Naive thymus-derived CD4-positive, alpha-beta T cell (primary cell): ENCODE measurements at regions of chr9 and their contacts with region 1.

Region 1: DNA sequence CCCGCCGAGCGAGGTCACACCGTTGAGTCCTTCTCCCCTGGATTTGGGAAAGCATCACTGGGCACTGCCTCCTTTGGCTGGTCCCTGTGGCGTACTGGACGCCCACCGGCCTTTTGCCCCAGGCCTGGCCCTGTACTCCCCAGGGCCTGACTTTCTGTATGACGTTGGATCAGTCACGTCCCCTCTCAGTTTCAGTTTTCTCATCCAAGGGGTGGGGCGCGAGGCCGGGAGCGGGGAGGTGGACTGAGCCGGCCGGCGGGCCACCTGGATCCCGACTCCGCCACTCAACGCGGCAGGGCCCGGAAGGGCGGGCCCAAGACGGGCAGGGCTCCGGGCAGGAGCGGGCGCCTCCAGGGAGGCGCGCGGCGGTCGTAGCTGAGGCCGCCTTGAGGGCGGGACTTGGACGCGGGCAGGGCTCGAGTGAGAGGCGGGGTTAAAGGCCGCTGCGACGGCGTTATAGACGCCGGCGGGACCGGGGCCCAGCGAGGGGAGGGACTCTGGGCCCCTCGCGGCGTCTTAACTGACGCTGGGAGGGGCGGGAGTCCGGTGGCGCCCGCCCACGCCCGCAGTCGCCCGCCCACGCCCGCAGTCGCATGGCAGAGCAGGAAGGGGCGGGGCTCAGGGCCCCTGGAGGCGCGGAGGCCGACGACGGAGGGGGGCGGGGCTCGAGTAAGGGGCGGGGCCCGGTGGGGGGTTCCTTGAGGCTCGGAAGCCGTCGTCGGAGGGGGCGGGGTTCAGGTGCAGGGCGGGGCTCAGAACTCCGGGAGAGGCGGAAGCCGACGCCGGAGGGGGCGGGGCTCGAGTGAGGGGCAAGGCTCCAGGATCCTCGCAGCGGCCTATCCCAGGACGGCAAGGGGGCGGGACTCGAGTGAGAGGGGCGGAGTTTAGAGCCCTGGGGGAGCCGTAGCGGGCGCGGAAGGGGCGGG is 549 bp upstream of the CARD19 start:
- DNase-seq: peak; percentile 99 to 100 (median 100)
- ATAC-seq: peak; percentile 88
- H3K4me3 ChIP-seq: peak overlapping the region; percentile 72
- H3K4me3 Mint-ChIP-seq: peak overlapping the region; percentile 83 to 95 (median 90)
- H3K27ac ChIP-seq: peak overlapping the region; percentile 93
- H3K27ac Mint-ChIP-seq: peak overlapping the region; percentile 93 to 99 (median 96)
- H3K4me1 ChIP-seq: peaks cover 41 to 58% of the 10 kb centered on the region in 2 donors
- H3K4me1 Mint-ChIP-seq: peaks cover 49 to 81% (median 71%) of the 10 kb centered on the region in 7 donors
- H3K27me3 ChIP-seq: no peaks in the 10 kb centered on the region
- H3K27me3 Mint-ChIP-seq: no peaks in the 10 kb centered on the region

Region 2: GRCh38 chr9:92439921-92440750 is 655.3 kb before region 1 on chr9:
- CTCF ChIA-PET with region 1: no interaction called
- POLR2A ChIA-PET with region 1: no interaction called
- intact Hi-C with region 1: no loop called
- DNase-seq: no peak
- ATAC-seq: no peak
- H3K4me3 ChIP-seq: peak overlapping the region; percentile 44
- H3K4me3 Mint-ChIP-seq: no peak overlapping the region
- H3K27ac ChIP-seq: no peak overlapping the region
- H3K27ac Mint-ChIP-seq: no peak overlapping the region
- H3K4me1 ChIP-seq: peaks cover 0 to 9% of the 10 kb centered on the region in 2 donors
- H3K4me1 Mint-ChIP-seq: peaks cover 0 to 10% (median 0%) of the 10 kb centered on the region in 7 donors
- H3K27me3 ChIP-seq: no peaks in the 10 kb centered on the region
- H3K27me3 Mint-ChIP-seq: no peaks in the 10 kb centered on the region

Region 3: DNA sequence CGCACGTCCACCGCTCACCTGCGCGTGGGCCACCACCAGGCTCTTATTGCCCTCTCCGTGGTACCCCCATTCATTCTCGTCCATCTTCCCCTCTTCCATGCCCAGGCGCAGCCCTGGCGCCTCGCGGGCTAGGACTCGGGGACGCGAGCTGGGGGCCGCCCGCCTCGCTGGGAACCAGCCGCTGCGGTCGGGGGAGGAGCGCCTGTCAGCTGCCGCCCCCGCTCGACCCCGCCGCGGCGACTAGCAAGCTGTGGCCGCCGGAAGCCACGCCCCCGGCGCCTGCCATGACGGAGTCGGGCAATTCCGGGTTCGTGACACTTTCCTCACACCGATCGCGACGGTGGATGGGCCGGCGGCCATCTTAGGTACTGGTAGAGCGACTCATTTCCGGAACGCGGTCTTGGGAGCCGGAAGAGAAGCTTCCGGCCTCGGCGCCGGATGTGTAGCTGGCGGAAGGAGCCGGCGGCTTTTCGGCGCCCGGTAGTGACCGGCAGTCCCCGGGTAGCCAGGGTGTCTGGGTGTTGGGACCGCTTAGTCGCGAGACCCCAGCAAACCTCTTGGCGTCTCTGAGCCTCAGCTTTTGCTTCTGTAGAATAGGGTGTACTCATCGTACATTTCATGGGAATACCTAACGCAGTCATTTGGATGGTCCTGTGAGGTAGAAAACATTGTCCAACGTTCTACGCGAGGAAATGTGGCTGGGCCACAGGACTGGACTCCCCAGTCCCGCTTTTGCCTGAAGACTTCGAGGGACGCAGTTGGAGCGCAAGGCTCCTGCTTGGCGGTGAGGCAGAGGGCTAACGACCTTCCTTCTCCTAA is 425.4 kb before region 1 on chr9 and contains the start of gene IPPK:
- CTCF ChIA-PET with region 1: no interaction called
- POLR2A ChIA-PET with region 1: no interaction called
- intact Hi-C with region 1: loop called in 1 of 2 experiments (anchors 1 kb)
- DNase-seq: peak; percentile 92 to 99 (median 96)
- ATAC-seq: peak; percentile 98
- H3K4me3 ChIP-seq: peak within 1 kb of the TSS; percentile 100
- H3K4me3 Mint-ChIP-seq: peak within 1 kb of the TSS; percentile 83 to 98 (median 95)
- H3K27ac ChIP-seq: peak within 1 kb of the TSS; percentile 91
- H3K27ac Mint-ChIP-seq: peak within 1 kb of the TSS; percentile 90 to 98 (median 95)
- H3K4me1 ChIP-seq: peaks cover 16 to 23% of the 10 kb centered on the region in 2 donors
- H3K4me1 Mint-ChIP-seq: peaks cover 27 to 46% (median 36%) of the 10 kb centered on the region in 7 donors
- H3K27me3 ChIP-seq: no peaks in the 10 kb centered on the region
- H3K27me3 Mint-ChIP-seq: no peaks in the 10 kb centered on the region
- total RNA-seq, gene IPPK: 5.9 to 12.8 (median 7.4) TPM

Region 4: DNA sequence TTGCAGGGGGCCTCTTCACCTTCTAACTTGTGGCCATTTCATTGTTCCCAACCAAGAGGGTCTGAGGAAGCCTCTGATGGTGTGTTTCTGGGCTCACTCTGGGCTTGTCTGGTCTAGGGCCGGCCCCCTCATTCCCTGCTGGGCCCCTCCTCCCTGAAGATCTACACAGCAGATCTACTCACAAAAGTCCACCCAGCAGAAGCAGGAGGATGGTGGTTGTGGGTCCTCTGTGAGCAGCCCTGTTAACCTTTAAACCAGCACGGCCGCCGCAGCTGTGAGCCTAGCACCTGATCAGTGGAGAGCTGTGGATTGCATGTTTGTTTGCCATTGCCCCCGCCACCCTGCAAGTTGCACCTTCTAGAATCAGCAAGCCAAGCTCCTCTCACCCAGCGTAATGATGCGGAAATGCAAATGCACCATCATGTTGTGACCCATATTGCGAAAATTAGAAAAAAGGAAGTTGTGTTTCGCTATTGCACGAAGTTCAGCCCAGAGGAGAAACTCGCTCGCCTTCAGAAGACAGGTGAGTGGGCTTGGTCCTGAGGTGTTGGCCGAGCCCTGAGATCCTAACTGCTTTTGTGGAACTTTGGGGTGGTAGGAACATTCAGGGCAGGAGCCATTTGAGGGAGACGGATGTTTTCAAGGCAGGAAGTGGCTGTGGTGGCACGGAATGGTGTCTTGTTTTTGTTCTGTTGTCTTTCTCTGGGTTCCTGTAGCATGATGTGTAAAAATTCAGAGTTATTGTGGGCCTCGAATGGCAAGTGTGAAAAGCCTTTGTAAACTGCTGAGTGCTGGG is 131.4 kb before region 1 on chr9:
- CTCF ChIA-PET with region 1: no interaction called
- POLR2A ChIA-PET with region 1: interaction called, 7 read pairs
- intact Hi-C with region 1: loop called (anchors 1 kb)
- DNase-seq: peak; percentile 54 to 94 (median 93)
- ATAC-seq: peak; percentile 84
- H3K4me3 ChIP-seq: peak overlapping the region; percentile 85
- H3K4me3 Mint-ChIP-seq: peak overlapping the region; percentile 86 to 98 (median 93)
- H3K27ac ChIP-seq: peak overlapping the region; percentile 85
- H3K27ac Mint-ChIP-seq: peak overlapping the region; percentile 96 to 99 (median 98)
- H3K4me1 ChIP-seq: peaks cover 60 to 67% of the 10 kb centered on the region in 2 donors
- H3K4me1 Mint-ChIP-seq: peaks cover 40 to 63% (median 56%) of the 10 kb centered on the region in 7 donors
- H3K27me3 ChIP-seq: no peaks in the 10 kb centered on the region
- H3K27me3 Mint-ChIP-seq: no peaks in the 10 kb centered on the region

Region 5: DNA sequence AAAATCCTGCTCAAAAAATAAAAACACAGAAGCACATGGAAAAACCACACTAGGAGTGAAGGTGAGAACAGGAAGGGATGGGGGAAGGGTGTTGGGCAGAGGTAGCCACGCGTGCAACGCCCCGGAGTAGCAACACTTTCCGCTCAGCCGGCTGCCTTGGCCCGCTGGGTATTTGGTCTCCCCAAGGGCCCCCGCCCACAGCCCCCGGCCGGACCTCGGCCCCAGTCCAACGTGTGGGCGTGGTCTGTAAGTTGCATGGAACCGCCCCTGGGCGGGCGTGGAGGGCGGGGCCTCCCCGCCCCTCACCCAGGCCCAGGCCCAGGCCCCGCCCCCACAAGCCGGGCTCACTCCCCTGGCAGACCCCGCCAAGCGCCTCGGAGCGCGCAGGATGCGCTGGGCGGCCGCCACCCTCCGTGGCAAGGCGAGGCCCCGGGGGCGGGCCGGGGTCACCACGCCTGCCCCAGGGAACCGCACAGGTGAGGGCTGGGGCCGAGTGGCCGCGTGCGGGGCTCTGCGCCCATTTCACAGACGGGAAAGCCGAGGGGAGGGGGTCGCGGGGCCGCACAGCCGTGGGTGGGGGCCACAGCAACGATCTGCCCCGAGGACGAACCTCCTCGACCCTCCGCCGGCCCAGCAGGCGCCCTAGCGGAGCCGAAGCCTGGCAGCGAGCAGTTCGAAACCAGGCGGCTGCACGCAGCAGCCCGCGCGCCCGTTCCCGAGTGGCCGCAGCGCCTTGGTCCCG is 36.9 kb before region 1 on chr9 and contains the start of gene SUSD3:
- CTCF ChIA-PET with region 1: interaction called, 3 read pairs
- POLR2A ChIA-PET with region 1: interaction called, 60 read pairs
- intact Hi-C with region 1: loop called (anchors 1 kb)
- DNase-seq: peak; percentile 47 to 82 (median 65)
- ATAC-seq: peak; percentile 81
- H3K4me3 ChIP-seq: peak within 1 kb of the TSS; percentile 90
- H3K4me3 Mint-ChIP-seq: peak within 1 kb of the TSS; percentile 93 to 97 (median 94)
- H3K27ac ChIP-seq: peak within 1 kb of the TSS; percentile 88
- H3K27ac Mint-ChIP-seq: peak within 1 kb of the TSS; percentile 97 to 100 (median 99)
- H3K4me1 ChIP-seq: peaks cover 52 to 56% of the 10 kb centered on the region in 2 donors
- H3K4me1 Mint-ChIP-seq: peaks cover 31 to 78% (median 65%) of the 10 kb centered on the region in 7 donors
- H3K27me3 ChIP-seq: no peaks in the 10 kb centered on the region
- H3K27me3 Mint-ChIP-seq: no peaks in the 10 kb centered on the region
- total RNA-seq, gene SUSD3: 62.8 to 83.5 (median 68.7) TPM

Region 6: GRCh38 chr9:93108291-93109041 is 13.0 kb after region 1 on chr9:
- CTCF ChIA-PET with region 1: interaction called, 5 read pairs
- POLR2A ChIA-PET with region 1: interaction called, 49 read pairs
- intact Hi-C with region 1: loop called (anchors 1 kb)
- DNase-seq: peak in 2 of 9 donors; percentile 6 to 59
- ATAC-seq: no peak
- H3K4me3 ChIP-seq: no peak overlapping the region
- H3K4me3 Mint-ChIP-seq: peak overlapping the region in 2 of 10 donors; percentile 39 to 56
- H3K27ac ChIP-seq: peak overlapping the region; percentile 10
- H3K27ac Mint-ChIP-seq: peak overlapping the region in 8 of 9 donors; percentile 38 to 82 (median 62)
- H3K4me1 ChIP-seq: peaks cover 15 to 34% of the 10 kb centered on the region in 2 donors
- H3K4me1 Mint-ChIP-seq: peaks cover 34 to 53% (median 48%) of the 10 kb centered on the region in 7 donors
- H3K27me3 ChIP-seq: no peaks in the 10 kb centered on the region
- H3K27me3 Mint-ChIP-seq: no peaks in the 10 kb centered on the region